CD4-positive, alpha-beta memory T cell (primary cell): ENCODE measurements at regions of chr15 and their contacts with region 1.

Region 1: DNA sequence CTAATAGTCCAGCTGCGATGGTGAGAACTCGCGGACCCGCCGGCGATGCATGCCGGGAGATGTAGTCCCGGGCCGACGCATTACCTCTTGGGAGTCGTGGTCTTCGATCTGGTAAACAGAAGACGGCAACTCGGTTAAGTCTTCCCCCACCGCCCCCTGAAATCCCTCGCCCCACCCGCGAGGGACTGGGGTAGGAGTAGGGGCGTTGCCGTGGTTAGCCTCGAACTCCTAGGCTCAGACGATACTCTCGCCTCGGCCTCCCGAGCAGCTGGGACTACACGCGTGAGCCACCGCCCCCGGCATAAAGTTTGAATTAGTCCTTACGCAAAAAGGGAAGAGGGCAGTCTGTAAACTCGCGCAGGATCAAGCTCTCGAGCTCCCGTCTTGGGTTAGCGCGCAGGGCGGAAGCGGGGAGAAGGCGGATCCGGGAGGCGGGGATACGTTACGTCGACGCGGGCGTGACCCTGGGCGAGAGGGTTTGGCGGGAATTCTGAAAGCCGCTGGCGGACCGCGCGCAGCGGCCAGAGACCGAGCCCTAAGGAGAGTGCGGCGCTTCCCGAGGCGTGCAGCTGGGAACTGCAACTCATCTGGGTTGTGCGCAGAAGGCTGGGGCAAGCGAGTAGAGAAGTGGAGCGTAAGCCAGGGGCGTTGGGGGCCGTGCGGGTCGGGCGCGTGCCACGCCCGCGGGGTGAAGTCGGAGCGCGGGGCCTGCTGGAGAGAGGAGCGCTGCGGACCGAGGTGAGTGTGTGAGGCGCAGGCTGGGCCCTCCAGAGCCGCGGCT is at the start of gene RAD51:
- DNase-seq: peak; percentile 91 to 95 (median 92)
- H3K4me3 ChIP-seq: peak within 1 kb of the TSS; percentile 67 to 81
- H3K4me3 Mint-ChIP-seq: peak within 1 kb of the TSS; percentile 96 to 100 (median 98)
- H3K27ac ChIP-seq: peak within 1 kb of the TSS; percentile 95
- H3K27ac Mint-ChIP-seq: peak within 1 kb of the TSS; percentile 96 to 99 (median 99)
- H3K4me1 ChIP-seq: peaks cover 13% of the 10 kb centered on the region
- H3K4me1 Mint-ChIP-seq: peaks cover 11 to 32% (median 19%) of the 10 kb centered on the region in 4 donors
- H3K27me3 ChIP-seq: no peaks in the 10 kb centered on the region
- H3K27me3 Mint-ChIP-seq: no peaks in the 10 kb centered on the region
- total RNA-seq, gene RAD51: 0.93 to 1.7 TPM

Region 2: GRCh38 chr15:40564591-40565332 is 130.1 kb before region 1 on chr15 and contains the start of gene CCDC32:
- CTCF ChIA-PET with region 1: no interaction called
- POLR2A ChIA-PET with region 1: interaction called, 21 read pairs
- intact Hi-C with region 1: no loop called
- DNase-seq: peak; percentile 93 to 98 (median 96)
- H3K4me3 ChIP-seq: peak within 1 kb of the TSS; percentile 97 to 98
- H3K4me3 Mint-ChIP-seq: peak within 1 kb of the TSS; percentile 95 to 98 (median 97)
- H3K27ac ChIP-seq: peak within 1 kb of the TSS; percentile 92
- H3K27ac Mint-ChIP-seq: peak within 1 kb of the TSS; percentile 89 to 99 (median 98)
- H3K4me1 ChIP-seq: peaks cover 34% of the 10 kb centered on the region
- H3K4me1 Mint-ChIP-seq: peaks cover 26 to 65% (median 42%) of the 10 kb centered on the region in 4 donors
- H3K27me3 ChIP-seq: no peaks in the 10 kb centered on the region
- H3K27me3 Mint-ChIP-seq: no peaks in the 10 kb centered on the region
- total RNA-seq, gene CCDC32: 31.7 to 32.4 TPM

Region 3: DNA sequence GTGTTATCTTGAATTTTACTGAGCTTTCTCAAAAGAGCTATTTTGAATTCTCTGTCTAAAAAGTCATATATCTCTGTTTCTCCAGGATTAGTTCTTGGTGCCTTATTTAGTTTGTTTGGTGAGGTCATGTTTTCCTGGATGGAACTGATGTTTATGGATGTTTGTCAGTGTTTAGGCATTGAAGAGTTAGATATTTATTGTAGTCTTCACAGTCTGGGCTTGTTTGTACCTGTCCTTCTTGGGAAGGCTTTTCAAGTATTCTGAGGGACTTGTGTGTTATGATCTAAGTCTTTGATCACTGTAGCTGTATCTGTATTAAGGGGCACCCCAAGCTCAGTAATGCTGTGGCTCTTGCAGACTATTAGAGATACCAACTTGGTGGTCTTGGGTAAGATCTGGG is 10.5 kb before region 1 on chr15:
- CTCF ChIA-PET with region 1: interaction called, 12 read pairs
- POLR2A ChIA-PET with region 1: interaction called, 8 read pairs
- intact Hi-C with region 1: no loop called
- DNase-seq: no peak
- H3K4me3 ChIP-seq: no peak overlapping the region
- H3K4me3 Mint-ChIP-seq: no peak overlapping the region
- H3K27ac ChIP-seq: no peak overlapping the region
- H3K27ac Mint-ChIP-seq: peak overlapping the region in 2 of 7 donors; percentile 51 to 64
- H3K4me1 ChIP-seq: no peaks in the 10 kb centered on the region
- H3K4me1 Mint-ChIP-seq: no peaks in the 10 kb centered on the region
- H3K27me3 ChIP-seq: no peaks in the 10 kb centered on the region
- H3K27me3 Mint-ChIP-seq: no peaks in the 10 kb centered on the region

Region 4: DNA sequence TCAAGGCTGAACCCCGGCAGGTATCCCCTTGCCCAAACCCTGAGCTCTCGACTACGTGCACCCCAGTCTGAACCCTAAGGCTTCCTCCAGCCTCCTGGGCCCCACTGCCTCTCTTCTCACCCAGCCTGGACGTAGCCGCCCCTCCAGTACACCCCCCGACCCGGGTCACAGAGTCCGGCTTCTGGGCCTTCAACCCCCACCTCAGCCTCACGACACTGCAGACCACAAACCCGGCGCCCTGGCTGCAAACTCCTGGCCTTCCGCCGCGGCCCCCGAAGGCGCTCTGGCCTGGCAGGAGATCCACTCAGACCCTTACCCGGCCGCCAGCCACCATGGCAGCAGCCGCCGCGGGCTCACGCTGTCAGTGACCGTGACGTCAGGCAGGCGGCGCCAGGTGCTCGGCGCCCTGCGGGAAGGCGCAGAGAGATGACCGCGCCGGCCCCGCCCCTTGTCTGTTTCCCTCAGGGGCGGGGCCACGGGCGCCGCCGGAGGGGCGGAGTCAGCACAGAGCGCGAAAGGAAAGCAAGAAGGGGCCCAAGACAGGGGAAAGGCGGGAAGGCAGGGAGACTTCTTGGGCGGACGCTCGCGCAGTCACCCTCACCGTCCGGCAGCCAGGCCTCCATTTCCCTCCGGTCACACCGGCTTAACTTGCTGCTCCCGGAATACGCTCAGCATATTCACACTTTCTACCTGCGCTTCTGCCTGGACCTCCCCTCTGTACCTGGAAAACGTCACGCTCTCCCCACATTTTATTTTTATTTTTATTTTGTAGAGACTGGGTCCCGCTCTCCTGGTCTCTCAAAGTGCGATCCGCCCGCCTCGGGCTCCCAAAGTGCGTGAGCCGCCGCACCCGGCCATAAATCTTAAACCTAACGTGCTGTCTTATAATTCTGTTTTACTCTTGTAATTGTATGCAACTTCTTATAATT is 60.3 kb after region 1 on chr15 and contains the start of gene RMDN3:
- CTCF ChIA-PET with region 1: interaction called, 5 read pairs
- POLR2A ChIA-PET with region 1: interaction called, 12 read pairs
- intact Hi-C with region 1: loop called (anchors 1 kb)
- DNase-seq: peak; percentile 90 to 93 (median 92)
- H3K4me3 ChIP-seq: peak within 1 kb of the TSS; percentile 65 to 96
- H3K4me3 Mint-ChIP-seq: peak within 1 kb of the TSS; percentile 91 to 99 (median 94)
- H3K27ac ChIP-seq: peak within 1 kb of the TSS; percentile 85
- H3K27ac Mint-ChIP-seq: peak within 1 kb of the TSS; percentile 82 to 98 (median 95)
- H3K4me1 ChIP-seq: peaks cover 31% of the 10 kb centered on the region
- H3K4me1 Mint-ChIP-seq: peaks cover 11 to 40% (median 26%) of the 10 kb centered on the region in 4 donors
- H3K27me3 ChIP-seq: no peaks in the 10 kb centered on the region
- H3K27me3 Mint-ChIP-seq: no peaks in the 10 kb centered on the region
- total RNA-seq, gene RMDN3: 24.5 to 26.7 TPM

Region 5: GRCh38 chr15:40782580-40783227 is 87.8 kb after region 1 on chr15:
- CTCF ChIA-PET with region 1: interaction called, 40 read pairs
- POLR2A ChIA-PET with region 1: interaction called, 8 read pairs
- intact Hi-C with region 1: no loop called
- DNase-seq: peak; percentile 74 to 79 (median 75)
- H3K4me3 ChIP-seq: no peak overlapping the region
- H3K4me3 Mint-ChIP-seq: no peak overlapping the region
- H3K27ac ChIP-seq: no peak overlapping the region
- H3K27ac Mint-ChIP-seq: peak overlapping the region in 3 of 7 donors; percentile 23 to 73 (median 70)
- H3K4me1 ChIP-seq: peaks cover 12% of the 10 kb centered on the region
- H3K4me1 Mint-ChIP-seq: peaks cover 13 to 24% (median 17%) of the 10 kb centered on the region in 4 donors
- H3K27me3 ChIP-seq: no peaks in the 10 kb centered on the region
- H3K27me3 Mint-ChIP-seq: no peaks in the 10 kb centered on the region

Region 6: DNA sequence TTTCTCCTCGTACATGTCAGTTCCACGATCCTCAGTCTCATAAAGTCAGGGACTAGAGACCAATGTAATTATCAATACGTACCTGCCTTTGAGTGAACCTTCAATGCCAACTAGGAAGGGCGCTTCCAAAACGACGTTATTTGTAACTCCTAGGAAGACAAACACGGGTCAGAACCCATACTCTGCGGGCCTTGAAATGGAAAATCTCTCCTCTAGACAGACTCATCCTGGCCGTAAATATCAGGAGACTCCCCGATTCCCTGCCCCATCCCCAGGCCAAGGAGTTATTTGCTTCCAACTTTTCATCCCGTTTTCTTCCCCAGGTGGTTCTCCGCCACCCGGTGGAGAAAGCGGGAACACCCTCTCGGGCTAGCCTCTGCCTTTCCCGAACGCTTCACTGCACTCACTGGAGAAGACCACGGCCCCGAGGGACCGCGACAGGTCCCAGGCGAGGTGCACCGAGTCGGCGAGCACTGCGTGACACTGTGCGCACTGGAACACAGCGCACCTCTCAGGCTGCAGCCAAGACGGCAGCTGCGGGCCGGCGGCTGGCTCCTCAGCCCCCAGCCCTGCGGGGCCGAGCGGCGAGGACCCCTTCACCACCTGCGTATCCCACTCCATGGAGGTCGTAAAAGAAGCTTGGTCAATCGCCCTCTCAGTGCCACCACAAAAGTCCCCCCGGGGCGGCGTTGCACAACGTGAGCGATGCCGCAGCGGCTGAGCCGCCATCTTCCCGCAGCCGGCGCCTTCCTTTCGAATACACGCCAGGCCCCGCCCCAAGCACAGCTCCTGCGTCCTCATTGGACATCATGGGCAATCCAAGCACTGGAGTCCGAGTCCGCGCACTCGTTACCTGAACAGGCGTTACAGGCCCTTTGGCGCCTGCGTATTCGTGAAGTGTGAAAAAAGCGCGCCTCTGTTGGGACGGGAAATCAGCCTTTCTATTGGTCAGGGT is 637.2 kb after region 1 on chr15 and contains the start of gene OIP5:
- CTCF ChIA-PET with region 1: no interaction called
- POLR2A ChIA-PET with region 1: no interaction called
- intact Hi-C with region 1: loop called (anchors 10 kb)
- DNase-seq: peak; percentile 97 to 100 (median 99)
- H3K4me3 ChIP-seq: peak within 1 kb of the TSS; percentile 88 to 89
- H3K4me3 Mint-ChIP-seq: peak within 1 kb of the TSS; percentile 97 to 100 (median 99)
- H3K27ac ChIP-seq: peak within 1 kb of the TSS; percentile 67
- H3K27ac Mint-ChIP-seq: peak within 1 kb of the TSS; percentile 79 to 98 (median 95)
- H3K4me1 ChIP-seq: peaks cover 32% of the 10 kb centered on the region
- H3K4me1 Mint-ChIP-seq: peaks cover 16 to 45% (median 29%) of the 10 kb centered on the region in 4 donors
- H3K27me3 ChIP-seq: no peaks in the 10 kb centered on the region
- H3K27me3 Mint-ChIP-seq: no peaks in the 10 kb centered on the region
- total RNA-seq, gene OIP5: 0.52 to 0.72 TPM